ENCODE measurements at regions of chr16 and their contacts with region 1.

Region 1: GRCh38 chr16:67326472-67327309 is at the starts of genes KCTD19 and LRRC36:
- DNase-seq: peak; percentile 87
- ATAC-seq: peak; percentile 91
- H3K4me3 Mint-ChIP-seq: peak within 1 kb of the TSS; percentile 91
- H3K27ac Mint-ChIP-seq: peak within 1 kb of the TSS; percentile 88
- H3K4me1 Mint-ChIP-seq: peaks cover 16% of the 10 kb centered on the region
- H3K27me3 Mint-ChIP-seq: peaks cover 21% of the 10 kb centered on the region
- CTCF ChIP-seq: peak; percentile 55
- total RNA-seq, gene KCTD19: 3.0 to 3.9 TPM
- total RNA-seq, gene LRRC36: 0.81 to 0.90 TPM

Region 2: DNA sequence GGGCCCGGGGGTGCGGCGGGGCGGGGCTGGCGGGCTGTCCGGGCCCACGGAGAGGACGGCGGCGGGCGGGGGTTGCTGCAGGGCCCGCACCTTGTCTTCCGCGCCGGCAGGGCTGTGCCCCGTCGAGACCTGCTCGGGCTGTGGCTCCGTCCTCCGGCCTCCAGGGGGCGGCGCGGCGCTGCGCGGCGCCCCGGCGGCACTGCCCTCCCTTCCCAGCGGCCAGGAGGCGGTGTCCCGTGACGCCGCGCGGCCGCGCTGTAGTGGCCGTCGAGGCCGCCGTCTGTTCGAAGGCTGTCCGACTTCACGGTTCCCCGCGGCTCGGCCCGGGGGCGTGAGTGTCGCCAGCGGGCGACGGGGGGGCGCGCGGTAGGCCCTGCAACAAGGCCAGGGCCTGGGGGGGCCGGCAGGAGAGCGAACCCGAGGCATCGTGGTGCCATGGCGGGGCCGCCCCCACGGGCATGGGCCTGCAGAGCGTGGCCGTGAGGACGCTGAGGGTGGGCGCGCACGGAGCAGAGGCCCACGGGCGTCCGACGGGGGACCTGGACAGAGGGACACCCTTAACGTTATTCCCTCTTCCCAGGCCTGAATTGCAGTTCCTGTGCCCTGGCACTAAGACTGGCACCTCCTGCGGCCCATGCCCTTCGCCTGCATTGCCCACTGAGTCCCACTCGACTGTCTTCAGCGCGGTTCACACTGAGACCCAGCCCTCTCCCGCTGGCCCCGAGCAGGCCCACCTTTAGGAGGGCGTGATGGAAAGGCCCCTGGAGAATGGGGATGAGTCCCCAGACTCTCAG is 47.2 kb before region 1 on chr16 and contains the start of gene PLEKHG4:
- CTCF ChIA-PET with region 1: interaction called, 8 read pairs
- POLR2A ChIA-PET with region 1: no interaction called
- intact Hi-C with region 1: loop called (anchors 5 kb)
- DNase-seq: peak; percentile 87
- ATAC-seq: peak; percentile 94
- H3K4me3 Mint-ChIP-seq: peak within 1 kb of the TSS; percentile 89
- H3K27ac Mint-ChIP-seq: peak within 1 kb of the TSS; percentile 90
- H3K4me1 Mint-ChIP-seq: peaks cover 18% of the 10 kb centered on the region
- H3K27me3 Mint-ChIP-seq: no peaks in the 10 kb centered on the region
- CTCF ChIP-seq: peak; percentile 86
- total RNA-seq, gene PLEKHG4: 17.3 to 20.8 TPM

Region 3: GRCh38 chr16:67311607-67312488 is 14.8 kb before region 1 on chr16:
- CTCF ChIA-PET with region 1: interaction called, 11 read pairs
- POLR2A ChIA-PET with region 1: interaction called, 4 read pairs
- intact Hi-C with region 1: no loop called
- DNase-seq: peak; percentile 97
- ATAC-seq: peak; percentile 95
- H3K4me3 Mint-ChIP-seq: peak overlapping the region; percentile 9
- H3K27ac Mint-ChIP-seq: peak overlapping the region; percentile 94
- H3K4me1 Mint-ChIP-seq: peaks cover 36% of the 10 kb centered on the region
- H3K27me3 Mint-ChIP-seq: peaks cover 3% of the 10 kb centered on the region
- CTCF ChIP-seq: no peak

Region 4: GRCh38 chr16:67339453-67339852 is 12.8 kb after region 1 on chr16:
- CTCF ChIA-PET with region 1: interaction called, 13 read pairs
- POLR2A ChIA-PET with region 1: interaction called, 3 read pairs
- intact Hi-C with region 1: no loop called
- DNase-seq: no peak
- ATAC-seq: peak; percentile 47
- H3K4me3 Mint-ChIP-seq: no peak overlapping the region
- H3K27ac Mint-ChIP-seq: no peak overlapping the region
- H3K4me1 Mint-ChIP-seq: no peaks in the 10 kb centered on the region
- H3K27me3 Mint-ChIP-seq: peaks cover 7% of the 10 kb centered on the region
- CTCF ChIP-seq: peak; percentile 34

Region 5: DNA sequence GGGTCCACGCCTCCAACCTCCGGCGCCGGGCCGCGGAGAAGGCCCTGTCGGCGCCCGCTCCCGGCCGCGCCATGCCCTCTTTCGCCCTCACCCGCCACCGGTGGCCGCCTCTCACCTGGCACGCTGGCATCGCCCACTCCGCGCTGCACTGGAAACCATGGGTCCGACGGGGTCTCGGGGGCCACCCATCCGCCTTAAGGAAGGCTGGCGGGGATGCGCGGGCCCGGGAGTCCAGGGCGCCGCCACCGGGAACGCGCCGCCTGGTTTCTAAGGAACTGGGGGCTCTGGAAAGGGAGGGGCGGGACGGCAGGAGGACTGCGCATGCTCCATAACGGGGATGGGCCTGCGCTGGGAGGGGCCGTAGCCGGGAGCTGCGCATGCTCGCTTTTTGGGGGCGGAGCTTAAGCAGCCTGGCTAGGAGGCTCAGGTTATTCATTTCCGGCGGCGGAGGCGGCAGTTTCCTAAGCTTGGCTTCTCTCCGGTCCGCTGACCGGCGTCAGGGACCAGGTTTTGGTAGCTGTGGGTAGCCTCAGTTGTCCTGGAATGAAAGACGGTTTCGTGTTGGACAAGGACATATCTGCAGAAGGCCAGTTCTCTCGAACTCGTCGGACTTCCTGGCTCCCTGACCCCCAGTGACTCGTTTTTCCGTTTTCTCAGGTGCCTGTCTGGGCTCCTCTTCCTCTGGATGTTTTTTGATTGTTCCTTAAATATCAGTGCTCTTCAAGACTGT is 392.5 kb after region 1 on chr16 and contains the start of gene GFOD2:
- CTCF ChIA-PET with region 1: no interaction called
- POLR2A ChIA-PET with region 1: no interaction called
- intact Hi-C with region 1: no loop called
- DNase-seq: peak; percentile 98
- ATAC-seq: peak; percentile 98
- H3K4me3 Mint-ChIP-seq: peak within 1 kb of the TSS; percentile 84
- H3K27ac Mint-ChIP-seq: peak within 1 kb of the TSS; percentile 98
- H3K4me1 Mint-ChIP-seq: peaks cover 32% of the 10 kb centered on the region
- H3K27me3 Mint-ChIP-seq: no peaks in the 10 kb centered on the region
- CTCF ChIP-seq: no peak
- total RNA-seq, gene GFOD2: 11.6 to 14.1 TPM